ENCODE measurements at regions of chr4 and their contacts with region 1.

Region 1: DNA sequence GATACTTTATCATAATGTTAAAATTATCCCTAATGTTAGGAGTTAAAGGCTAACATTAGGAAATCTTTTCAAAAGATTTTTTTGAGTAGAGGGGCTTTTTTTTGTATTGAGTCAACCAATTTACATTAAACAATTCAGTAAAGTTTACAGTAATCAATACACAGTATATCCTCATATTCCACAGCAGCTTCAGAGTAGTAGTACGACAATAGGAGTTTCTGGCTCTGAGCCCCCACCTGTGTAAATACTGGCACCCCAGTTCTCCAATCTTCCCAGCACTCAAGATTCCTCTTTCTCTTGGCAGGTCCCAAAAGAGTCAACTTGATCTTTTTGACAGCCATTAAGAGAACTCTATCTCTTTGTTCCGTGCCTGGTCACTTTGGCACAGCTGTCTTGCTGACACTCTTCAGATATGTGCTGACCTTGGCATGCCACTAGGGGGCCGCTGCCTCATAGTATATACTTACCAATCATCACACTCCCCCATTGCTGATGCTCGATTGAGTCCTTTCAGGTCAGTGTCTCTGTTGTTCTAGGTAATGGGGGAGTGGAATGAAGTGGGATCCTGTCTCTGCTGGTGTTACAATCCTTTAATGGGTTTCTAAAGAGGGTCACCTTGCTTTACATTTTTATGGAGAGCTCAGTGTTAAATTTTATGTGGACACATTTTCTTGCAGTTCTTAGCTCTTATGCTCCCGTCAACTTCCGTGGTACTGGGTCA is 19.5 kb upstream of the CCNI start:
- DNase-seq: peak; percentile 45
- H3K4me3 Mint-ChIP-seq: no peak overlapping the region
- H3K27ac Mint-ChIP-seq: no peak overlapping the region
- H3K4me1 Mint-ChIP-seq: peaks cover 18% of the 10 kb centered on the region
- H3K27me3 Mint-ChIP-seq: peaks cover 4% of the 10 kb centered on the region

Region 2: GRCh38 chr4:77203380-77204197 is 108.3 kb after region 1 on chr4:
- intact Hi-C with region 1: loop called (anchors 1 kb)
- DNase-seq: peak; percentile 47
- H3K4me3 Mint-ChIP-seq: no peak overlapping the region
- H3K27ac Mint-ChIP-seq: no peak overlapping the region
- H3K4me1 Mint-ChIP-seq: peaks cover 13% of the 10 kb centered on the region
- H3K27me3 Mint-ChIP-seq: peaks cover 15% of the 10 kb centered on the region

Region 3: DNA sequence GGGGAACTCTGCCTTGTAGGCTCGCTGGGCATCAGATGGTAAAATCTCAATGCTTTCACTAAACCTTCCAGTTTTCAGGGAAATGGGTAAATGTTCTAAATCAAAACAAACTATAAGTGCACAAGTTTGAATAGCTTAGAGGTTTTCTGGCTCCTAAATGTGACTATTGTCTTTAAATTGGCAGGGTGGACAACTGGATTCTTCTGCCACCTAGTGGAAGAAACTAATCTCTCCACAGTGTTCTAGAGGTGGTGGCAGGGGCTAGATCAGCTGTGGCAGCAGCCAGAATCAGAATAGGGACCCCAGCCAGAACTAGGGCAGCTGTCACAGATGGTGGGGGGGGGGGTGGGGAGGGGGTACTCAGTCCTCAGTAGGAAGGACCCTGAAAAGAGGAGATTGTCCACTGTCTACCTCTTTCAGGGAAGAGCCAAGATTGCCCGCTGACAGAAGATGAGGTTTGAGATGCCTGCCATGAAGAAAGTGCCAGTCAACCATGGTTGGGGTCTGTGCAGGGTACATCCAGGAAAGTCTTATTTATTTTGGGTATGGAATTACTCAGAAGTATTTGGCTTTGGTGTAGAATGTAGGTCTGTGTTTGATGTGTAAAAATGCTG is 263.2 kb after region 1 on chr4:
- intact Hi-C with region 1: loop called (anchors 1 kb)
- DNase-seq: no peak
- H3K4me3 Mint-ChIP-seq: no peak overlapping the region
- H3K27ac Mint-ChIP-seq: no peak overlapping the region
- H3K4me1 Mint-ChIP-seq: no peaks in the 10 kb centered on the region
- H3K27me3 Mint-ChIP-seq: no peaks in the 10 kb centered on the region

Measured in activated T-helper 1 cell treated with anti-CD3 and anti-CD28 coated beads, Interleukin-12 subunit alpha, Interleukin-12 subunit beta, Interleukin-2, Interleukin-4 antibody, amounts not matched to agents 30 ng/mL and 10 ng/mL and 1 ng/mL, durations not matched to agents 14 hours and 24 hours and 36 hours (primary cell).